Right ventricle myocardium inferior (tissue), 1 donor: ENCODE measurements at regions of chr14 and their contacts with region 1.

Region 1: GRCh38 chr14:94129111-94129757 is at the start of gene IFI27L2:
- DNase-seq: peak; percentile 88
- ATAC-seq: peak; percentile 94
- total RNA-seq, gene IFI27L2: 52.4 TPM

Region 2: DNA sequence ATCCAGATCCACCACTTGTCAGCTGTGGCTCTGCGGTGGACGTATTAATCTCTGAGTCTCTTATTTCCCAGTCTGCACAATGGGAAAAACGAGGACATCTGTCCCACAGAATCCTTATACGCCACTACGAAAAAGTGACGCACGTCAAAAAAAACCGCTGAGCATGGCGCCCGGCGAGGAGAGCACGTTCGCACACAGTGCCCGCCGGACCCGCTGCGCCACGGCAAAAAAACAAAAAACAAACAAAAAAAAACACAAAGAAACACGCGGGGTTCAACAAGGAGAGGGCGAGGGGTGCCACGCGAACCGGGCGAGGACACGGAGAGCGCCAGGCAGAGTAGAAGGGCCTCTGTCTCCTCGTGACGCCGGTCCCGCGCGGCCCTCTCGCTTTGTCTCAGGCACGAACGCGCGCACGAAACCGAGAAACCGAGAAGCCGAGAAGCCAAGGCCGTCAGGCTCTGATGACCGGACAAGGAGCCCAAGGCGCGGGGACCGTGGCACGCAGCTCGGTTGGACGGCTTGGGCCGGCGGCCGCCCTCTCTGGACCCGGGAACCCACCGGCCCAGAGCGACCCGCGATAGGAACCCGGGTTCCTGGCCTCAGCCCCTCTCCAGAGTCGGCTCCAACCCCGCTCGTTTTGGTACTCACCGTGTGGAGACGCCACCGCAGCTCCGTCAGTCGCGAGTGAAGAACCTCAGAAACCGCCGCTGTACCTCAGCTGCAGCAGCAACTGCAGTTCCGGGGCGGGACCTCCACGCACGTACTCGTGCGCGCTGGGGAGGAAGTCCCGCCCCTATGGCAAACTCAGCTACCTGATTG is 48.6 kb before region 1 on chr14 and contains the start of gene DDX24:
- intact Hi-C with region 1: loop called (anchors 2 kb)
- DNase-seq: peak; percentile 98
- ATAC-seq: peak; percentile 99
- total RNA-seq, gene DDX24: 187 TPM

Region 3: GRCh38 chr14:94180655-94181271 is 51.5 kb after region 1 on chr14:
- intact Hi-C with region 1: loop called (anchors 5 kb)
- DNase-seq: no peak
- ATAC-seq: peak; percentile 65

Region 4: GRCh38 chr14:94474581-94475031 is 345.4 kb after region 1 on chr14:
- intact Hi-C with region 1: no loop called
- DNase-seq: no peak
- ATAC-seq: no peak